Activated CD4-positive, alpha-beta memory T cell treated with anti-CD3 and anti-CD28 coated beads for 36 hours (primary cell): ENCODE measurements at regions of chr7 and their contacts with region 1.

Region 1: DNA sequence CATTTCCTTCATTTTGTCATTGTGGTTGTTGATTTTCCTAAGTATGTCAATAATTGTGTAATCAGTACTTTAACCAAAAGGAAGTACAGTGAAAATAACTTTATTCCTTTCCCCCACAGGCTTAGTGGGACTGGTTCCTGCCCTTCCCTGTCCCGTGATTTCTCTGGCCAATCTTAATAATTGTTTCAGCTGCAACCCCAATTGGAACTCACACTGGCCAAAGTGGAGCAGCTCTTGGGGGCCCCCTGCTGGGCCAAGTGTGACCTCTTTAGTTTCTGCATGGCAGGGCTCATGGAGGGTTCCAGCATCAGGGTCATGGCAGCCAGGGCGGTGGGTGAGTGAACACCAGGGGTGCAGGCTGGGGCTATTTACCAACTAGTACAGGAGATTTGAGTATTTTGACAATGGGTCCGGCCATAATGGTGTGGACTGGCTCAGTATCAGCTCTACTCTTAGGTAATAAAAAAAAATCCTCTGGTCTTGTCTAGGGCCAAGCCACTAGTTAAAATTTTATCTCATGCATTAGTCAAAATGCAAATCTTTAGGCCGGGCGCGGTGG is 31.7 kb downstream of the CYCS start:
- DNase-seq: peak; percentile 88
- H3K4me3 Mint-ChIP-seq: no peak overlapping the region
- H3K27ac Mint-ChIP-seq: no peak overlapping the region
- H3K4me1 Mint-ChIP-seq: peaks cover 14% of the 10 kb centered on the region
- H3K27me3 Mint-ChIP-seq: peaks cover 2% of the 10 kb centered on the region

Region 2: DNA sequence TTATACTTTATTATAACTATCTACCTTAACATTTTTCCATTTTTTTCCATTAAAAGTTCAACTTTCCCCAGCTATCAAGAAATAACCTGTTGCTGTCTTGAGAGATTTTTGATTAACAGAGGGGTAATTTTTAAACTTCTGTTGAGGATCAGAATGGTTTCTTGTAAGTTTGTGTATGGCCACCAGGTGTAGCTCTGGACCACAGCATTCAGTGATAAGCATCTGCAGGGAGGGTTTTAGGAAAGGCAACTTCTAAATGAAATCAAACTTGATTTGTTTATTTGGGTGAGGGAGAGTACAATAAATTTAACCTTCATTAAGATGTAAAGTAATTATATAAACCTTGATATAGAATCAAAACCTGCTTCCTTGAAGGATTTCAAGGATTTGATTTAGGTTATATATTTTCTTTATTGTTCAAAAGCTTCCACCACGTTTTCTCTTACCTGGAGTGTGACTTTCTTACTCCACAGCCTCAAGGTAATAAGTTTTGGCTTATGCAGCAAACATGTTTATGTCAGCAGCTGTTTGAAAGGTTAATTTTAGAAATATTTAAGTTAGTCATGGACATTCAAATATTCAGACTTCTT is 1230.0 kb before region 1 on chr7:
- CTCF ChIA-PET with region 1: no interaction called
- POLR2A ChIA-PET with region 1: no interaction called
- intact Hi-C with region 1: loop called (anchors 10 kb)
- DNase-seq: peak; percentile 22
- H3K4me3 Mint-ChIP-seq: no peak overlapping the region
- H3K27ac Mint-ChIP-seq: no peak overlapping the region
- H3K4me1 Mint-ChIP-seq: no peaks in the 10 kb centered on the region
- H3K27me3 Mint-ChIP-seq: peaks cover 8% of the 10 kb centered on the region

Region 3: DNA sequence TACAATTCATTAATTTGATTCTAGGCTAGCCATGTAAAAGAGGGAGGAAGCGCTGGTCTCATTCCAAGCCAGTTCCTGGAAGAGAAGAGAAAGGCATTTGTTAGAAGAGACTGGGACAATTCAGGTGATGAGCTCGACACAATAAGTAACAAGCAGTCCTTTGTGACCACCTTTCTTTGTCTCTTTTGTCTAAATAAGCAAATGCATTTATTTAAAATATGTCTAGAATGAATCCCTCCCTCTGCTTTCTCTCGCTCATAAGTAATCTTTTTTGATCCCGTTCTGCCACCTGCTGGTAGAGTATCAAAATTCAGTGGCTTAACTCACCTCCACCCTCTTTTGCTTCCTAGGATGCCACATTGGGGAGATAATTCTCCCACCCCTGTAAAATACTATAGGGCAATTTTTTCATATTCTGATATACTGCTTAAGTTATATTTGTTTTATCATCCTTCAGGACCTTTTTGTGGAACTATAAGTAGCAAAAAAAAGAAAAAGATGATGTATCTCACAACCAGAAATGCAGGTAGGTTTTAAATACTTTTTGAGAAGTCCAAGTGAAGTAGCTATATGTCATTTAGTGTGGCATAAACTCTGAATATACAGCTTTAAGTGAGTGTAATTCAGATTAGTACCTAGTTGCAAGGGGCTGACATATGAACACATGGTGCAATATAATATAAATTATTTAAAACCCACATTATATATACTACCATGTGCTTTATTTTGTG is 427.6 kb before region 1 on chr7:
- CTCF ChIA-PET with region 1: interaction called, 5 read pairs
- POLR2A ChIA-PET with region 1: no interaction called
- intact Hi-C with region 1: loop called (anchors 5 kb)
- DNase-seq: peak; percentile 32
- H3K4me3 Mint-ChIP-seq: no peak overlapping the region
- H3K27ac Mint-ChIP-seq: no peak overlapping the region
- H3K4me1 Mint-ChIP-seq: no peaks in the 10 kb centered on the region
- H3K27me3 Mint-ChIP-seq: no peaks in the 10 kb centered on the region

Region 4: DNA sequence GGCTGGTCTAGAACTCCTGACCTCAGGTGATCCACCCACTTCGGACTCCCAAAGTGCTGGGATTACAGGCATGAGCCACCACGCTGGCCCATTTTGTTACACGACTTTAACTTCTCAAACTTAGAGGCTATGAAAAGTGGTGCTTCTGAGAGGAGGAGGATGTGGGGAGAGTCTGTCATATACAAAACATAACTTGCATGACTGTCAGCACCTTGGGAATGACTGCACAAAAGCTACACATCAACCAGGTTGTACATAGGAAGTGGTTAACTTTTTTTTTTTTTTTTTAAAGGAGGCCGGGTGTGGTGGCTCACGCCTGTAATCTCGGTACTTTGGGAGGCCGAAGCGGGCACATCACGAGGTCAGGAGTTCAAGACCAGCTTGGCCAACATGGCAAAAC is 292.7 kb before region 1 on chr7:
- CTCF ChIA-PET with region 1: interaction called, 18 read pairs
- POLR2A ChIA-PET with region 1: no interaction called
- intact Hi-C with region 1: no loop called
- DNase-seq: peak; percentile 27
- H3K4me3 Mint-ChIP-seq: no peak overlapping the region
- H3K27ac Mint-ChIP-seq: no peak overlapping the region
- H3K4me1 Mint-ChIP-seq: peaks cover 10% of the 10 kb centered on the region
- H3K27me3 Mint-ChIP-seq: no peaks in the 10 kb centered on the region

Region 5: GRCh38 chr7:24877790-24878311 is 215.5 kb before region 1 on chr7:
- CTCF ChIA-PET with region 1: interaction called, 20 read pairs
- POLR2A ChIA-PET with region 1: no interaction called
- intact Hi-C with region 1: no loop called
- DNase-seq: peak; percentile 46
- H3K4me3 Mint-ChIP-seq: peak overlapping the region; percentile 38
- H3K27ac Mint-ChIP-seq: peak overlapping the region; percentile 61
- H3K4me1 Mint-ChIP-seq: peaks cover 55% of the 10 kb centered on the region
- H3K27me3 Mint-ChIP-seq: no peaks in the 10 kb centered on the region

Region 6: GRCh38 chr7:25103773-25104172 is 10.4 kb after region 1 on chr7:
- CTCF ChIA-PET with region 1: interaction called, 19 read pairs
- POLR2A ChIA-PET with region 1: no interaction called
- intact Hi-C with region 1: no loop called
- DNase-seq: no peak
- H3K4me3 Mint-ChIP-seq: no peak overlapping the region
- H3K27ac Mint-ChIP-seq: no peak overlapping the region
- H3K4me1 Mint-ChIP-seq: no peaks in the 10 kb centered on the region
- H3K27me3 Mint-ChIP-seq: no peaks in the 10 kb centered on the region

Region 7: GRCh38 chr7:25143763-25144162 is 50.4 kb after region 1 on chr7:
- CTCF ChIA-PET with region 1: no interaction called
- POLR2A ChIA-PET with region 1: no interaction called
- intact Hi-C with region 1: no loop called
- DNase-seq: no peak
- H3K4me3 Mint-ChIP-seq: no peak overlapping the region
- H3K27ac Mint-ChIP-seq: no peak overlapping the region
- H3K4me1 Mint-ChIP-seq: no peaks in the 10 kb centered on the region
- H3K27me3 Mint-ChIP-seq: no peaks in the 10 kb centered on the region